Lower leg skin (tissue), 4 donors: ENCODE measurements at regions of chr21 and their contacts with region 1.

Region 1: GRCh38 chr21:25890001-25890400 is 155.2 kb downstream of the GABPA start:
- DNase-seq: no peak
- H3K4me3 ChIP-seq: no peak overlapping the region
- CTCF ChIP-seq: no peak
- POLR2A ChIP-seq: no peak

Region 2: DNA sequence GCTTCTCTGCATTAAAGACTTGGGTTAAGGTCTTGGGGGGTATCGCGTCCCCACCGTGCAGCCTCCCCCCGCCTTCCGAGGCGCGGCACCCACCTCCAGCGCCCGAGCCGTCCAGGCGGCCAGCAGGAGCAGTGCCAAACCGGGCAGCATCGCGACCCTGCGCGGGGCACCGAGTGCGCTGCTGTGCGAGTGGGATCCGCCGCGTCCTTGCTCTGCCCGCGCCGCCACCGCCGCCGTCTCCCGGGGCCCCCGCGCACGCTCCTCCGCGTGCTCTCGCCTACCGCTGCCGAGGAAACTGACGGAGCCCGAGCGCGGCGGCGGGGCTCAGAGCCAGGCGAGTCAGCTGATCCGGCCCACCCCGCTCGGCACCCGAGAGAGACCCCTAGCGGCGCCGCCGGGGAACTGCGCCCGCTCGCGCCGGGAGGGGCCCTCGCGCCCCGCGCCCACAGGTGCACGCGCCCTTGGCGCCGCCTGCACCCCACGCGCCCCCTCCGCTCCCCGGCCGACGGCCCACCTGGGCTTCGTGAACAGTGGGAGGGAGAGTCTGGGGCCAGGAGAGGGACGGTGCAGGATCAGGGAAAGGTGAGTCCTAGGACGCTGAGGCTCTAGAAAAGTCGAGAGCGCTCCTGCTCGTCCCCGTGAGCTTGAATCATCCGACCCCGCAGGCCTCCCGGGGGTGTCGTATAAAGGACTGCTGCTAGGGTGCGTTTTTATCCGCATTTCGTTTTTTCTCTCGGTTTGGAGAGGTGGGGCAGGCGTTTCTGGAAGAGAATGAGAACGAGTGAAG is 280.7 kb after region 1 on chr21 and contains the start of gene APP:
- intact Hi-C with region 1: loop called (anchors 5 kb)
- DNase-seq: peak; percentile 76 to 97
- H3K4me3 ChIP-seq: peak within 1 kb of the TSS; percentile 73
- CTCF ChIP-seq: no peak
- POLR2A ChIP-seq: no peak
- total RNA-seq, gene APP: 240 to 403 (median 331) TPM